Activated CD4-positive, alpha-beta T cell treated with anti-CD3 and anti-CD28 coated beads for 36 hours (primary cell): ENCODE measurements at regions of chr11 and their contacts with region 1.

Region 1: DNA sequence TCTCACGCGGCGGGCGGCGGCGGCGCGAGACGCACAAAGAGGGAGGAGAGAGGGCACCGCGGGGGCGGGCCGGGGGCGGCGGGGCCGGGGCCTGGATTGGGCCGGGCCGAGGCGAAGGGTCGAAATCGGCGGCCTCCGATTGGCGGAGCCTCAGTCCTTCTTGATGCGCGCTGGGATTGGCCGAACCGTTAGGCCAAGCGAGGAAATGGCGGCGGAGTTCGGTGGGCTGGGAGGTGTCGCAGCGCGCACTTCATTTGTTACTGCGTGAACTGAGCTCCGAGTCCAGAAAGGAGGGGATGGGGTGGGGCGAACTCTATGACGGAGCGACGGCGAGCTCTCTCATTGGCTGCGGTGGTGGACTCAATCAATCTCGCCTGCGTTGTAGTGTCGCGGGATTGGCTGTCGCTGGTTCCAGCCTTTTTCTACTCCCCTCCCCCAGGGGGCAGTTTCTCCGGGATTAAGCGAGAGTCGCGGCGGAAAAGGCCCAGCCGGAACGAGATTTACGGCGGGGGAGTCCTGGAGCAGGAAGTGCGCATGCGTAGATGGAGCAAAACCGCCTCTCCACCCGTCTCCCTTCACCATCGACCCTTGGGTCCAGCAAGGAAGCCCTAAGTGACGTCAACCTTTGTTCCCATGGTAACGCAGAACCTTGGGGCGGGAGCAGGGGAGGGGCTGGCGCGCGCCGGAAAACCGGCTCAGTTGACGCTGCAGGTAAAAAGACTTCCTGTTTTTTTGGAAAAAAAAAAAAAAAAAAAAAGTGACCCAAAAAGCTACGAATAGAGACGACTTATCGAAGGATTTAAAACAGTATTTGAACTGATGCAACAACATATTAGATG is at the start of gene SF1:
- DNase-seq: peak; percentile 99
- ATAC-seq: peak; percentile 91
- H3K4me3 Mint-ChIP-seq: peak within 1 kb of the TSS; percentile 97
- H3K27ac Mint-ChIP-seq: peak within 1 kb of the TSS; percentile 99
- H3K4me1 Mint-ChIP-seq: peaks cover 57% of the 10 kb centered on the region
- H3K27me3 Mint-ChIP-seq: no peaks in the 10 kb centered on the region
- total RNA-seq, gene SF1: 318 to 362 TPM

Region 2: GRCh38 chr11:64240394-64241174 is 538.1 kb before region 1 on chr11 and contains the start of gene FKBP2:
- CTCF ChIA-PET with region 1: no interaction called
- POLR2A ChIA-PET with region 1: no interaction called
- intact Hi-C with region 1: loop called in 1 of 2 experiments (anchors 2 kb)
- DNase-seq: peak; percentile 99
- ATAC-seq: peak; percentile 68
- H3K4me3 Mint-ChIP-seq: peak within 1 kb of the TSS; percentile 86
- H3K27ac Mint-ChIP-seq: peak within 1 kb of the TSS; percentile 99
- H3K4me1 Mint-ChIP-seq: peaks cover 31% of the 10 kb centered on the region
- H3K27me3 Mint-ChIP-seq: no peaks in the 10 kb centered on the region
- total RNA-seq, gene FKBP2: 19.9 to 21.3 TPM

Region 3: GRCh38 chr11:64759561-64760349 is 19.0 kb before region 1 on chr11 and contains the start of gene PYGM:
- CTCF ChIA-PET with region 1: interaction called, 38 read pairs
- POLR2A ChIA-PET with region 1: interaction called, 21 read pairs
- intact Hi-C with region 1: loop called in 1 of 2 experiments (anchors 2 kb)
- DNase-seq: no peak
- ATAC-seq: no peak
- H3K4me3 Mint-ChIP-seq: no peak within 1 kb of the TSS
- H3K27ac Mint-ChIP-seq: peak within 1 kb of the TSS; percentile 83
- H3K4me1 Mint-ChIP-seq: peaks cover 46% of the 10 kb centered on the region
- H3K27me3 Mint-ChIP-seq: no peaks in the 10 kb centered on the region
- total RNA-seq, gene PYGM: 0.87 to 1.5 TPM

Region 4: GRCh38 chr11:64854534-64855429 is 76.1 kb after region 1 on chr11:
- CTCF ChIA-PET with region 1: no interaction called
- POLR2A ChIA-PET with region 1: interaction called, 9 read pairs
- intact Hi-C with region 1: loop called in 1 of 2 experiments (anchors 5 kb)
- DNase-seq: peak; percentile 65
- ATAC-seq: no peak
- H3K4me3 Mint-ChIP-seq: peak overlapping the region; percentile 45
- H3K27ac Mint-ChIP-seq: peak overlapping the region; percentile 84
- H3K4me1 Mint-ChIP-seq: peaks cover 92% of the 10 kb centered on the region
- H3K27me3 Mint-ChIP-seq: no peaks in the 10 kb centered on the region

Region 5: DNA sequence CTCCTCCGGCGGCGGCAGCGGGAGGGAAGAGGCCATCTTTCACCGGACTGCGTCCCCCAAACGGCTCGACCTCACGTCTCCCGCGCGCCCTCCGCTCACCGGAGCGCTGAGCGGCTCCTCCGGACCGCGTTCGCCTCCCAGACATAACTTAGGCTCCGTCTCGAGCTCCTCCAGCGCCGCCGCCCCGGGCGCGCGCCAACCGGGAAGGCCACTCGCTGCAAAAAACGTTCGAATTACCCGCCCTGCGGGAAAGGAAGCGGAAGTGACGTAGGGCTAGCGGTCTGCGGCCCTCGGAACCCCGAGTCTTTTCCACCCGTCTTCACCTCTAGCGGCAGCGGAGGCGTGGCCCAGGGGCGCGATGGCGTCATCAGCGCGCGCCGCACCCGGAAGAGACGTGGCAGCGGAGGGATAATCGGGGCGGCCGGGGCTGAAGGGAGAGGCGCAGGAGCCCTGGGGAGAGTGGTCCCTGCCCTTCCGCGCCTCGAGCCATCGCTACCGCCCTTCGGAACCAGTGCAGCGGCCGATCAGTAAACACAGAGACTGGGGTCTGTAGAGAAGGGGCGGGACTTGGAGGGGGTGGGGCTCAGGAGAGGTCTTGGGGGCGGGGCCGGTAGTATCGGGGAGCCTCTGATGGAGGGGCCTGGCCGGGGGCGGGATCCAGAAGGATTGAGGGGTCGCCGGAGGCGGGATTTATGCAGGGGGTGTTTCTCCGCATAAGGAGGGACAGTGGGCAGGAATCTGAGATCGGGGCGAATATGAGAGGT is 305.3 kb after region 1 on chr11 and contains the starts of genes CDCA5 and ZFPL1:
- CTCF ChIA-PET with region 1: no interaction called
- POLR2A ChIA-PET with region 1: no interaction called
- intact Hi-C with region 1: loop called in 1 of 2 experiments (anchors 1 kb)
- DNase-seq: peak; percentile 97
- ATAC-seq: peak; percentile 81
- H3K4me3 Mint-ChIP-seq: peak within 1 kb of the TSS; percentile 99
- H3K27ac Mint-ChIP-seq: peak within 1 kb of the TSS; percentile 98
- H3K4me1 Mint-ChIP-seq: peaks cover 41% of the 10 kb centered on the region
- H3K27me3 Mint-ChIP-seq: no peaks in the 10 kb centered on the region
- total RNA-seq, gene CDCA5: 111 to 119 TPM
- total RNA-seq, gene ZFPL1: 24.2 to 31.8 TPM

Region 6: DNA sequence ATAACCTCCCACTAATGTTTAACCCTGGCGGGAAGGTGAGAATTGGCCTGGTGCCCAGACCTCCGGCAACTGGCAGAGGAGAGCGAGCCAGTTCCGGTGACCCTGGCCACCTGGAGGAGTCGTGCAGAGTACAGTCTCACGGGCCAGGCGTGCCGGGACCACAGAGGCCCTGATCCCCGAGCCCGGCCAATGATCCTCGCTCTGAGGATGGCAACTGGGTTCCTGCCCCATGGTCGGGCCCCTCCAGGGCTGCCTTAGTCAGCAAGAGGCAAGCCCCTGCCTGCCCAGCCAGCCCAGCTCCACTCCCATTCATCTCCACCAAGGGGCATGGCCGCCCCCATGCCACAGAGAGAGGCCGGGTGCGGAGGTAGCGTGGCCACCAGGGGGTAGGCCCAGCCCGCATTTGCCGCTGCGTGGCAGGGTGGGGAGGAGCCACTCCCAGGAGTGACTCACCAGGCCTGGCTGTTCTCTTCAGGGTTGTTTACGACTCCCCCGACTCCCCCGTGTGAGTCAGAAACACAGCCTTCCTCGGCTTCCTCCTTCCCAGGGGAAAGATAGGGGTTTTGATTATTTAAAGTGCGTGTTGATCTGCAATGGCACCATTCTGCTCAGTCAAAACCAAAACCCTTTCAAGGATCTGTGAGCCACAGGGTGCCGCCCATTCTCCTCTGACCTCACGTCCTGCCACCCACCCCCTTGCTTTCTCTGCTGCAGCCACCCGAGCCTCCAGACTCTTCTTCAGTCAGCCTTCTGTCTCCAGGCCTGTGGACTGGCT is 603.5 kb after region 1 on chr11 and contains the start of gene SLC25A45:
- CTCF ChIA-PET with region 1: no interaction called
- POLR2A ChIA-PET with region 1: no interaction called
- intact Hi-C with region 1: loop called in 1 of 2 experiments (anchors 2 kb)
- DNase-seq: peak; percentile 97
- ATAC-seq: peak; percentile 84
- H3K4me3 Mint-ChIP-seq: peak within 1 kb of the TSS; percentile 78
- H3K27ac Mint-ChIP-seq: peak within 1 kb of the TSS; percentile 97
- H3K4me1 Mint-ChIP-seq: peaks cover 37% of the 10 kb centered on the region
- H3K27me3 Mint-ChIP-seq: no peaks in the 10 kb centered on the region
- total RNA-seq, gene SLC25A45: 13.2 to 14.3 TPM